Sigmoid colon (tissue), 7 donors: ENCODE measurements at regions of chr12 and their contacts with region 1.

Region 1: DNA sequence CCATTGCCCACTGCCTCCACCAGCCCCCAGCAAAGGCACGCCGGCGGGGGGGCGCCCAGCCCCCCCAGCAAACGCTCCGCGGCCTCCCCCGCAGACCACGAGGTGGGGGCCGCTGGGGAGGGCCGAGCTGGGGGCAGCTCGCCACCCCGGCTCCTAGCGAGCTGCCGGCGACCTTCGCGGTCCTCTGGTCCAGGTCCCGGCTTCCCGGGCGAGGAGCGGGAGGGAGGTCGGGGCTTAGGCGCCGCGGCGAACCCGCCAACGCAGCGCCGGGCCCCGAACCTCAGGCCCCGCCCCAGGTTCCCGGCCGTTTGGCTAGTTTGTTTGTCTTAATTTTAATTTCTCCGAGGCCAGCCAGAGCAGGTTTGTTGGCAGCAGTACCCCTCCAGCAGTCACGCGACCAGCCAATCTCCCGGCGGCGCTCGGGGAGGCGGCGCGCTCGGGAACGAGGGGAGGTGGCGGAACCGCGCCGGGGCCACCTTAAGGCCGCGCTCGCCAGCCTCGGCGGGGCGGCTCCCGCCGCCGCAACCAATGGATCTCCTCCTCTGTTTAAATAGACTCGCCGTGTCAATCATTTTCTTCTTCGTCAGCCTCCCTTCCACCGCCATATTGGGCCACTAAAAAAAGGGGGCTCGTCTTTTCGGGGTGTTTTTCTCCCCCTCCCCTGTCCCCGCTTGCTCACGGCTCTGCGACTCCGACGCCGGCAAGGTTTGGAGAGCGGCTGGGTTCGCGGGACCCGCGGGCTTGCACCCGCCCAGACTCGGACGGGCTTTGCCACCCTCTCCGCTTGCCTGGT is at the start of gene CDKN1B:
- DNase-seq: peak; percentile 98
- H3K4me3 ChIP-seq: peak within 1 kb of the TSS; percentile 77 to 94 (median 88)
- H3K27ac ChIP-seq: peak within 1 kb of the TSS; percentile 98 to 100 (median 99)
- H3K4me1 ChIP-seq: peaks cover 0 to 62% (median 59%) of the 10 kb centered on the region in 4 donors
- H3K27me3 ChIP-seq: no peaks in the 10 kb centered on the region
- CTCF ChIP-seq: no peak
- EP300 ChIP-seq: peak in 1 of 4 donors; percentile 56
- POLR2A ChIP-seq: peak; percentile 89 to 90
- total RNA-seq, gene CDKN1B: 52.5 to 106 (median 81.3) TPM

Region 2: DNA sequence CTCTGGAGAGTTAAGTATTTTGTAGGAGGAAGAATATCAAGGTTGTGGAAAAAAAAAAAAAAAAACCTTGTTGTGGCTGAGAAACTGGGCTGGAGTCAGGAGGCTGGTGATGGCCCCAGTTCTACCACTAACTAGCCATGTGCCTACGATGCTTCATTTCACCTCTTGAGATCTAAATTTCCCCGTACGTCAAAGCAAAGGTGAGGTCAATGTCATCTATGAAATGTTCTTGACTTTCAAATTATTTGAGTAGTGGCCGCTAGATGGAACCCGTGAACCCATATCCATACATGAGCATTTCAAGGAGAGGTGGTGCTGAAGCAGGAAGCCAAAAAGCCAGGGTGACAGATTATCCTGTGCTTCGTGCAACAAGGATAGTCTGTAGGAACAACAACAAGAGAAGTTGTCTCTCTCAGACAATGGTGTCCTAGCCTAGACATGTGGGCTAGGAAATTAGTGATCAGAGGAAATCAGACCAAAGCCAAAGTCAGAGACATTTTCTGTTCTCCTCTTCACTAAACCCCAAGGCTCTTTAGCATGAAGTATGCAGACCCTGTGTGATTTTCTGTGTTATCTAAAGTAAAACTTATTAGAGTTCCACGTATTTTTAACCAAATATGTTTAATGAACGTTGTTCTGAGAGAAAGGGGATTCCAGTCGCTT is 1163.0 kb before region 1 on chr12:
- intact Hi-C with region 1: loop called (anchors 10 kb)
- DNase-seq: peak; percentile 72
- H3K4me3 ChIP-seq: no peak overlapping the region
- H3K27ac ChIP-seq: peak overlapping the region in 3 of 4 donors; percentile 85 to 89 (median 87)
- H3K4me1 ChIP-seq: peaks cover 0 to 32% (median 26%) of the 10 kb centered on the region in 4 donors
- H3K27me3 ChIP-seq: no peaks in the 10 kb centered on the region
- CTCF ChIP-seq: peak; percentile 27 to 56 (median 51)
- EP300 ChIP-seq: no peak
- POLR2A ChIP-seq: no peak

Region 3: DNA sequence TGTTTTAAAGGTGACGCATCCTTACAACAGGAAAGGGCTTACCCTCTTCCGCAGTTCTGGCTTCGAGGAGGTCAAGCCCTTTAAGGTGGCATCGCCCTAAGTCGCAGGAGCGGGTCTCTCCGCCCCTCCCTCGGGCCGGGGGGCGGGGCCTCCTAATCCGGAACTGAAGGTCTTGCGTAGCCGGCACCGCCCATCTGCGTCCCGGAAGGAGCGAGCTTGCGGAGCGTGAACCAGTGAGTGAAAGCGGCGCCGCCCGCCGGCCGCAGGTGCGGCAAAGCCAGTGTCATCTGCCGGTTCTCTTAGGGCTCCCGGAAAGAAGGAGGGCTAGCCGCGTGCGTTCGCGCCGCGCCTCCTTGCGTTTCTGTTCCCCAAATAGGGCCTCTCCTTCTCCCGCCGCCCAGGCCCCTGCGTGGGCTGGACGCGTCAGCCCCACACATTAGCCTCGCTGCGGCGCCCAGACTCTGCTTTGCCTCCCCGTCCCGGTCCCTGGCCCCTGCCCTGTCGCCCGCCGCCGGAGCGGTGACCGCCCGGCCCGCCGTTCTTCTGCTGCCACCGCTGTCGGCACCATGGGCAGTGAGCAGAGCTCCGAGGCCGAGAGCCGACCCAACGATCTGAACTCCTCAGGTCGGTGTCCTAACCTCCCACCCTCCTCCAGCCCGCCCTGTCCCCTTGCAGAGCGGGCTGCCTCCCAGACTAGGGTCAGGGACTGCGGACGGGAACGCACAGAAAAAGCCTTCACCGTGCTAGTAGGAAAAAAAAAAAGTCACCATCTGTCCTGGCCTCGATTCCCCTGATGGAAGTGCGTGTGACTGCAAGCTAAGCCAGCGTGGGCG is 359.9 kb before region 1 on chr12 and contains the start of gene BORCS5:
- intact Hi-C with region 1: loop called (anchors 5 kb)
- DNase-seq: peak; percentile 98
- H3K4me3 ChIP-seq: peak within 1 kb of the TSS; percentile 82 to 99 (median 93)
- H3K27ac ChIP-seq: peak within 1 kb of the TSS; percentile 97 to 100 (median 98)
- H3K4me1 ChIP-seq: peaks cover 0 to 19% (median 11%) of the 10 kb centered on the region in 4 donors
- H3K27me3 ChIP-seq: no peaks in the 10 kb centered on the region
- CTCF ChIP-seq: peak in 1 of 4 experiments; percentile 8
- EP300 ChIP-seq: peak in 1 of 4 donors; percentile 62
- POLR2A ChIP-seq: peak; percentile 95 to 98
- total RNA-seq, gene BORCS5: 7.1 to 25.3 (median 14.0) TPM

Region 4: GRCh38 chr12:12611512-12612306 is 105.3 kb before region 1 on chr12 and contains the start of gene CREBL2:
- intact Hi-C with region 1: loop called (anchors 5 kb)
- DNase-seq: peak; percentile 97
- H3K4me3 ChIP-seq: peak within 1 kb of the TSS; percentile 54 to 85 (median 61)
- H3K27ac ChIP-seq: peak within 1 kb of the TSS; percentile 85 to 96 (median 90)
- H3K4me1 ChIP-seq: peaks cover 0 to 44% (median 36%) of the 10 kb centered on the region in 4 donors
- H3K27me3 ChIP-seq: no peaks in the 10 kb centered on the region
- CTCF ChIP-seq: no peak
- EP300 ChIP-seq: peak; percentile 27 to 85 (median 50)
- POLR2A ChIP-seq: peak; percentile 39 to 72
- total RNA-seq, gene CREBL2: 35.0 to 59.9 (median 46.5) TPM

Region 5: GRCh38 chr12:12999959-13000615 is 283.1 kb after region 1 on chr12 and contains the start of gene HEBP1:
- intact Hi-C with region 1: loop called (anchors 5 kb)
- DNase-seq: peak; percentile 97
- H3K4me3 ChIP-seq: peak within 1 kb of the TSS; percentile 62 to 83 (median 78)
- H3K27ac ChIP-seq: peak within 1 kb of the TSS; percentile 83 to 98 (median 90)
- H3K4me1 ChIP-seq: peaks cover 0 to 39% (median 18%) of the 10 kb centered on the region in 4 donors
- H3K27me3 ChIP-seq: no peaks in the 10 kb centered on the region
- CTCF ChIP-seq: no peak
- EP300 ChIP-seq: no peak
- POLR2A ChIP-seq: peak; percentile 75 to 78
- total RNA-seq, gene HEBP1: 32.1 to 54.8 (median 38.2) TPM